Activated T-helper 2 cell treated with anti-CD3 and anti-CD28 coated beads, Interferon-gamma antibody, Interleukin-2, Interleukin-4, amounts not matched to agents 10 μg/mL and 5 μg/mL and 100 μg/mL, durations not matched to agents 14 hours and 24 hours and 36 hours (primary cell): ENCODE measurements at regions of chr3 and their contacts with region 1.

Region 1: GRCh38 chr3:184314363-184314699 is at the start of gene EIF4G1:
- DNase-seq: peak; percentile 91
- H3K4me3 Mint-ChIP-seq: peak within 1 kb of the TSS; percentile 87
- H3K27ac Mint-ChIP-seq: peak within 1 kb of the TSS; percentile 86
- H3K4me1 Mint-ChIP-seq: peaks cover 22% of the 10 kb centered on the region
- H3K27me3 Mint-ChIP-seq: no peaks in the 10 kb centered on the region
- total RNA-seq, gene EIF4G1: 624 and 628 TPM in 2 replicates

Region 2: GRCh38 chr3:183837390-183837789 is 476.9 kb before region 1 on chr3:
- intact Hi-C with region 1: no loop called
- DNase-seq: no peak
- H3K4me3 Mint-ChIP-seq: no peak overlapping the region
- H3K27ac Mint-ChIP-seq: no peak overlapping the region
- H3K4me1 Mint-ChIP-seq: no peaks in the 10 kb centered on the region
- H3K27me3 Mint-ChIP-seq: no peaks in the 10 kb centered on the region

Region 3: GRCh38 chr3:184335661-184336546 is 21.6 kb after region 1 on chr3:
- intact Hi-C with region 1: loop called (anchors 2 kb)
- DNase-seq: peak; percentile 81
- H3K4me3 Mint-ChIP-seq: peak overlapping the region; percentile 88
- H3K27ac Mint-ChIP-seq: peak overlapping the region; percentile 87
- H3K4me1 Mint-ChIP-seq: peaks cover 54% of the 10 kb centered on the region
- H3K27me3 Mint-ChIP-seq: no peaks in the 10 kb centered on the region